ENCODE measurements at regions of chr3 and their contacts with region 1.

Region 1: DNA sequence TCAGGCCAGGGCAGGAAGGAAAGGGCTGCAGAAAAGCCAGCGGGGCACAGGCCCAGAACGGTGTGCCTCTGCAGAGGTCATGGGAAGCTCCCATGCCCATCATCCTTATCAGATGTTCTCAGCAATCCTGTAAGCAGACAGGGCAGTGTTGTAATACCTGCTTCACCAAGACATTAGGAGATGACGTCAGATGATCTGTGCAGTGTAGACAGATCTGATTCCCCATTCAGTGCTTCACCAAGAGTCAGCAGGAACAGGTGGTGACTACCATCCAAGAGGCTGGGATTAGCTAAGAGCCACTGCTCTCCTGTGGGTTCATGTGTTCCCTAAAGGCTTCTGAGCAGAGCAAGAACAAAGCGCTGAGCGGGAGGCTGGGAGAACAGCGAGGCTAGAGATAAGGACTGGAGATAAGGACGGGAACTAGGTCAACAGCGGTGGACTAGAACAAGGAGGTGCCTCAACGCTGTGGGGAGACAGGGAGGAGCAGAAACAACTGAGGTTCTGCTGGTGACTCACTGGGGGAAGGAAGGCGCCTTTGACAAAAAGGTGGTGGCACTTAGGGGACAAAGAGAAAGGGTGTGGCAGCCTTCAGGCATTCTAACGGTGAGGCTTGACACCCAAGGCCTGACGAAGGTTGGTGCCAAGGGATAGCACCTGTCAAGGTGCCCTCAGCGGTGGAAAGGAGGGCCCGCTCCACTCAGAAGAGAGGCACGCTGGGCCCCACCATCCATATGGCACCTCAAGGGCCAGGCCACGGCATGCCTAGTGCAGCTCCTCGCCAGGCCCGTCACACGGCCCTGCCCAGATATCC is 28.4 kb downstream of the CCDC12 start:
- DNase-seq: peak; percentile 74
- H3K4me3 Mint-ChIP-seq: peak overlapping the region; percentile 57
- H3K27ac Mint-ChIP-seq: peak overlapping the region; percentile 91
- H3K4me1 Mint-ChIP-seq: peaks cover 77% of the 10 kb centered on the region
- H3K27me3 Mint-ChIP-seq: no peaks in the 10 kb centered on the region

Region 2: GRCh38 chr3:46442576-46443562 is 505.3 kb before region 1 on chr3:
- CTCF ChIA-PET with region 1: no interaction called
- POLR2A ChIA-PET with region 1: no interaction called
- DNase-seq: no peak
- H3K4me3 Mint-ChIP-seq: no peak overlapping the region
- H3K27ac Mint-ChIP-seq: no peak overlapping the region
- H3K4me1 Mint-ChIP-seq: peaks cover 33% of the 10 kb centered on the region
- H3K27me3 Mint-ChIP-seq: peaks cover 13% of the 10 kb centered on the region

Region 3: GRCh38 chr3:46921041-46921440 is 27.1 kb before region 1 on chr3:
- CTCF ChIA-PET with region 1: interaction called, 11 read pairs
- POLR2A ChIA-PET with region 1: no interaction called
- DNase-seq: no peak
- H3K4me3 Mint-ChIP-seq: no peak overlapping the region
- H3K27ac Mint-ChIP-seq: no peak overlapping the region
- H3K4me1 Mint-ChIP-seq: peaks cover 16% of the 10 kb centered on the region
- H3K27me3 Mint-ChIP-seq: no peaks in the 10 kb centered on the region

Region 4: GRCh38 chr3:46926871-46927717 is 21.1 kb before region 1 on chr3:
- CTCF ChIA-PET with region 1: interaction called, 21 read pairs
- POLR2A ChIA-PET with region 1: no interaction called
- DNase-seq: peak; percentile 29
- H3K4me3 Mint-ChIP-seq: peak overlapping the region; percentile 6
- H3K27ac Mint-ChIP-seq: peak overlapping the region; percentile 84
- H3K4me1 Mint-ChIP-seq: peaks cover 70% of the 10 kb centered on the region
- H3K27me3 Mint-ChIP-seq: no peaks in the 10 kb centered on the region

Region 5: DNA sequence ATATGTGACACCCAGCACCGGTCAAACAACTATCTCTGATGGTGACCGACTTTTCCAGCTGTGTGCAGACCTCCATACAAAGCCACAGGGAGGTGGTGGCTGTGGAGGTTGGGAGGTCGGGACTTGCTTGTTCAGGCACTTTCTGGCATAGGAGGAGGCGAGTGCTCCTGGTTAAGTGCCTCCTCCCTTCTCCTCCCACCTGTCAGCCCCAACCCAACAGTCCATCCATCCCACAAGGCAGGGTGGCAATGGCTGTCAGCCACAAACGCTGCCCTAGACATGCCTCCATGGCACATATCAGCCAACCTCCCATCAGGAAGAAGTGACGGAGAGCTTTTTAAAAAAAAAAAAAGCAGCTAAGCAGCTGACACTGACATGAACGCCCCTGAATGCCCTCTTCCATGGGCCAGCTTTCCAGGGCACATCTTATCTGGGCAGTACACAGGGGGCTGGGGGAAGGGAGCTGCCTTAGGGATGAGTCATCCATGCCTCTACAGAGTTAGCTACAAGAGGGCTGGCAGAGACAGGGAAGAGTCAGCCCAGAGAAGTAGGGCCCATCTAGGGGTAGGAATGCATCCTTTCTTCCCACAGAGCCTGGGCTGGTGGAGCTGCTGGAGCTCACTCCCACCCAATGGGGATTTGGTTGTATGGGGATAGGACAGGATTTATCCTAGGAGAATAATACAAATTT is 12.9 kb before region 1 on chr3:
- CTCF ChIA-PET with region 1: interaction called, 21 read pairs
- POLR2A ChIA-PET with region 1: no interaction called
- DNase-seq: no peak
- H3K4me3 Mint-ChIP-seq: no peak overlapping the region
- H3K27ac Mint-ChIP-seq: no peak overlapping the region
- H3K4me1 Mint-ChIP-seq: peaks cover 56% of the 10 kb centered on the region
- H3K27me3 Mint-ChIP-seq: no peaks in the 10 kb centered on the region

Measured in activated CD4-positive, alpha-beta T cell treated with anti-CD3 and anti-CD28 coated beads, Interleukin-2, amount 10 ng/mL, durations not matched to agents 7 days and 5 days (primary cell).